Activated B cell treated with CpG ODN at 0.5 μM for 24 hours (primary cell): ENCODE measurements at regions of chr17 and their contacts with region 1.

Region 1: GRCh38 chr17:73092523-73093135 is at the start of gene SLC39A11:
- DNase-seq: peak; percentile 79
- ATAC-seq: peak; percentile 98
- H3K4me3 Mint-ChIP-seq: peak within 1 kb of the TSS; percentile 99
- H3K27ac Mint-ChIP-seq: peak within 1 kb of the TSS; percentile 91
- H3K4me1 Mint-ChIP-seq: peaks cover 25% of the 10 kb centered on the region
- H3K27me3 Mint-ChIP-seq: peaks cover 7% of the 10 kb centered on the region
- CTCF ChIP-seq: no peak
- total RNA-seq, gene SLC39A11: 27.2 and 34.8 TPM in 2 replicates

Region 2: GRCh38 chr17:73132085-73132492 is 39.5 kb after region 1 on chr17:
- CTCF ChIA-PET with region 1: no interaction called
- POLR2A ChIA-PET with region 1: interaction called, 16 read pairs
- intact Hi-C with region 1: loop called (anchors 1 kb)
- DNase-seq: peak; percentile 18
- ATAC-seq: peak; percentile 98
- H3K4me3 Mint-ChIP-seq: peak overlapping the region; percentile 44
- H3K27ac Mint-ChIP-seq: peak overlapping the region; percentile 14
- H3K4me1 Mint-ChIP-seq: peaks cover 19% of the 10 kb centered on the region
- H3K27me3 Mint-ChIP-seq: peaks cover 3% of the 10 kb centered on the region
- CTCF ChIP-seq: no peak

Region 3: GRCh38 chr17:73156166-73156840 is 63.7 kb after region 1 on chr17:
- CTCF ChIA-PET with region 1: no interaction called
- POLR2A ChIA-PET with region 1: interaction called, 4 read pairs
- intact Hi-C with region 1: loop called (anchors 2 kb)
- DNase-seq: peak; percentile 41
- ATAC-seq: peak; percentile 84
- H3K4me3 Mint-ChIP-seq: no peak overlapping the region
- H3K27ac Mint-ChIP-seq: no peak overlapping the region
- H3K4me1 Mint-ChIP-seq: peaks cover 17% of the 10 kb centered on the region
- H3K27me3 Mint-ChIP-seq: peaks cover 32% of the 10 kb centered on the region
- CTCF ChIP-seq: no peak

Region 4: DNA sequence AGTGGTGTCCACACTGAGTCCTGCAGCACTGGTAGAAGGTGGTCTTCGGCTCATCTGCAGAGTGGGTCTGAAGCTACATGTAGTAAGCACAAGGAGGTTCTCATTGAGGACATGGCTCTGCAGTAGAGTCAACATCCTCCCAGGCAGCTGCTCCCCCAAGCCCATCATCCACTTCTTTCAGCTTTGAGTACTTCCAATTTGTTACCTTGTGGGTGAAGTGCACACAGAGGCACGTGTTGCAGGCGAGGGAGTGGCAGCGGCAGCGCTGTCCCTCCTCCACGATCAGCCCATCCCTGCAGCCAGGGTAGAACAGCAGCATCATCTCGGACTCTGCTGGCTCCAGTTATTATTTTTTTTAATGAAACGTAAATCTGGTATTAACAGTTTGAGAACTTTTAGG is 70.4 kb after region 1 on chr17:
- CTCF ChIA-PET with region 1: no interaction called
- POLR2A ChIA-PET with region 1: interaction called, 13 read pairs
- intact Hi-C with region 1: no loop called
- DNase-seq: no peak
- ATAC-seq: no peak
- H3K4me3 Mint-ChIP-seq: no peak overlapping the region
- H3K27ac Mint-ChIP-seq: no peak overlapping the region
- H3K4me1 Mint-ChIP-seq: peaks cover 36% of the 10 kb centered on the region
- H3K27me3 Mint-ChIP-seq: peaks cover 68% of the 10 kb centered on the region
- CTCF ChIP-seq: no peak

Region 5: DNA sequence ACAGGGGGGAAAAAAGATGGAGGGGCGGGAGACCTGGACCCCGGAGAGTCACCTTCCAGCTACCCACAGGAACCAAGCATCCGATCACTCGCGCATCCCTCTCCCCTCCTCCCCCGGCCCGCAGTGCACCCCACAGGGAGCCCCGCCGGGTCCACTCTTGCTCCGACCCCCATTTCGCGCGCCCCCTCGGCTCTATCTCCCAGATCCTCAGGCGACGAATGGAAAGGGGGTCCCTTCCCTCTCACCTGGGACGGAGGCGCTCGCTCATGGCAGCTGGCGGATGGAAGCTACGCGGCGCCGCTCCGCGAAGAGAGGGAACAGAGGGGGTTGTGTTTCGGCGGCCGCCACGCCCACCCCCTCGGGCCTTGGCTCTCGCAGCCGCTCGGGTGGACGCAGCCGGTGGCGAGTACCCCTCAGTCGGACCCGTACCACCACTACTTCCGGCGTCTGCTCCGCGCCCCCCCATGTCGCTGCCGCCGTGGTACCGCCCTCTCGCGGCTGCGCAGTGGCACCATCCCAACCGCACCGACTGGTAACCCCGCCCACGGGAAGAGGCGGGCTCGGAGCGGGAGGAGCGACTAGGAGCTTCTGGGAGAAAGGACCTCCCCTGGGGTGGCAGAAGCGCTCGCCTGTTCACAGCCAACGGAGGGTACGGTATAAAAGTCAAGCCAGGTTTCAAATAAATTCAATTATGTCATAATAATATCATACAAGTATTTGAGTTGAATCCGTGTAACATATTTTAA is 139.4 kb after region 1 on chr17:
- CTCF ChIA-PET with region 1: no interaction called
- POLR2A ChIA-PET with region 1: no interaction called
- intact Hi-C with region 1: loop called (anchors 1 kb)
- DNase-seq: peak; percentile 97
- ATAC-seq: peak; percentile 95
- H3K4me3 Mint-ChIP-seq: peak overlapping the region; percentile 93
- H3K27ac Mint-ChIP-seq: peak overlapping the region; percentile 97
- H3K4me1 Mint-ChIP-seq: peaks cover 54% of the 10 kb centered on the region
- H3K27me3 Mint-ChIP-seq: no peaks in the 10 kb centered on the region
- CTCF ChIP-seq: no peak